ENCODE measurements at regions of chr5 and their contacts with region 1.

Region 1: GRCh38 chr5:67246108-67246507 is 49.5 kb upstream of the CD180 start:
- DNase-seq: peak; percentile 77
- H3K4me3 ChIP-seq: no peak overlapping the region
- H3K27ac ChIP-seq: no peak overlapping the region
- H3K4me1 ChIP-seq: peaks cover 33% of the 10 kb centered on the region
- H3K27me3 ChIP-seq: no peaks in the 10 kb centered on the region
- CTCF ChIP-seq: peak; percentile 34 to 35
- POLR2A ChIP-seq: no peak

Region 2: GRCh38 chr5:67315082-67315989 is 69.2 kb after region 1 on chr5:
- CTCF ChIA-PET with region 1: interaction called, 13 read pairs
- POLR2A ChIA-PET with region 1: no interaction called
- dilution Hi-C with region 1: no loop called
- intact Hi-C with region 1: loop called (anchors 2 kb)
- DNase-seq: peak; percentile 81
- H3K4me3 ChIP-seq: peak overlapping the region in 1 of 3 experiments; percentile 24
- H3K27ac ChIP-seq: peak overlapping the region; percentile 75
- H3K4me1 ChIP-seq: peaks cover 14% of the 10 kb centered on the region
- H3K27me3 ChIP-seq: no peaks in the 10 kb centered on the region
- CTCF ChIP-seq: no peak
- POLR2A ChIP-seq: no peak

Region 3: GRCh38 chr5:67620424-67621397 is 374.6 kb after region 1 on chr5:
- CTCF ChIA-PET with region 1: interaction called, 3 read pairs
- POLR2A ChIA-PET with region 1: no interaction called
- dilution Hi-C with region 1: no loop called
- intact Hi-C with region 1: loop called (anchors 10 kb)
- DNase-seq: no peak
- H3K4me3 ChIP-seq: no peak overlapping the region
- H3K27ac ChIP-seq: no peak overlapping the region
- H3K4me1 ChIP-seq: no peaks in the 10 kb centered on the region
- H3K27me3 ChIP-seq: no peaks in the 10 kb centered on the region
- CTCF ChIP-seq: no peak
- POLR2A ChIP-seq: no peak

Region 4: DNA sequence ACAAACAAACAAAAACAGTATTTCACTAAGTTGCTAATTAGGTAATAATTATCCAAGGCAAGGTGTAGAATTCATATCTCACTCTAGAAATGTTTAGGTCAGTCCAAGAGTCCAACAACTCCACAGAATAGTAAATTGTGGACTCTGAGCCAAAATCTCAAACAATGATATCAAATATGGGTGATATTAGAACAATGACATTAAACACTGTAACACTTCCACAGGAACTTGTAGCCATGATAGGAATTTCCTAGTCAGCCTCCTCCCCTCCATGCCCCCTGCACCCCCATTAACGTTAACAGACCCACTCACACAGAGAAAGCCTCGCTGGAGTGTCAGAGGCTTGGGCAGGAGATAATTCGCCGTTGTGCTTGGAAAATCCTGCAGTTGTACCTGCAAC is 664.4 kb after region 1 on chr5:
- CTCF ChIA-PET with region 1: interaction called, 3 read pairs
- POLR2A ChIA-PET with region 1: no interaction called
- dilution Hi-C with region 1: no loop called
- intact Hi-C with region 1: loop called (anchors 2 kb)
- DNase-seq: peak; percentile 60
- H3K4me3 ChIP-seq: no peak overlapping the region
- H3K27ac ChIP-seq: no peak overlapping the region
- H3K4me1 ChIP-seq: peaks cover 17% of the 10 kb centered on the region
- H3K27me3 ChIP-seq: no peaks in the 10 kb centered on the region
- CTCF ChIP-seq: no peak
- POLR2A ChIP-seq: no peak

Region 5: GRCh38 chr5:68252673-68253623 is 1006.8 kb after region 1 on chr5:
- CTCF ChIA-PET with region 1: interaction called, 222 read pairs
- POLR2A ChIA-PET with region 1: interaction called, 3 read pairs
- dilution Hi-C with region 1: no loop called
- intact Hi-C with region 1: loop called (anchors 1 kb)
- DNase-seq: peak; percentile 73
- H3K4me3 ChIP-seq: no peak overlapping the region
- H3K27ac ChIP-seq: no peak overlapping the region
- H3K4me1 ChIP-seq: peaks cover 48% of the 10 kb centered on the region
- H3K27me3 ChIP-seq: no peaks in the 10 kb centered on the region
- CTCF ChIP-seq: peak; percentile 79 to 80
- POLR2A ChIP-seq: no peak